PC-9 (cell line): ENCODE measurements at regions of chrX and their contacts with region 1.

Region 1: DNA sequence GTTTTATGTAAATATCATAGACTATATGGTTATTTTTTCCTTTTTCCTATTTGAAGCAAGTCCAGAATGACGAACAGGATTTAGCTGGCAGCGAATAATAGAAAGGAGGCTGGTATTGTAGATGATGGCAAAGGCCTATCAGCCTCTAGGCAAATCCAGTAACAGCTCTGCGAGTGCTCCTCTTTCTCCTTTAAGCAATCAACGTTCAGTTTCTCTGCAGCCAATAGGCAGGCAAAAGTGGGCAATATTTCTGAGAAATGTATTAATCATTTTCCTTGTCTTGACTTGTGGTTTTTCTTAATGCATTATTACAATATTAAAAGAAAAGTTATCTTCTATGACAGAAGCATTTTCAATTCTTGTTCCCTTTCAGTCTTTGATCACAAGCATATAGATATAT is 183.3 kb downstream of the SH3KBP1 start:
- DNase-seq: no peak
- H3K4me3 ChIP-seq: no peak overlapping the region
- H3K27ac ChIP-seq: no peak overlapping the region
- H3K4me1 ChIP-seq: peaks cover 4% of the 10 kb centered on the region
- H3K27me3 ChIP-seq: no peaks in the 10 kb centered on the region
- CTCF ChIP-seq: no peak

Region 2: DNA sequence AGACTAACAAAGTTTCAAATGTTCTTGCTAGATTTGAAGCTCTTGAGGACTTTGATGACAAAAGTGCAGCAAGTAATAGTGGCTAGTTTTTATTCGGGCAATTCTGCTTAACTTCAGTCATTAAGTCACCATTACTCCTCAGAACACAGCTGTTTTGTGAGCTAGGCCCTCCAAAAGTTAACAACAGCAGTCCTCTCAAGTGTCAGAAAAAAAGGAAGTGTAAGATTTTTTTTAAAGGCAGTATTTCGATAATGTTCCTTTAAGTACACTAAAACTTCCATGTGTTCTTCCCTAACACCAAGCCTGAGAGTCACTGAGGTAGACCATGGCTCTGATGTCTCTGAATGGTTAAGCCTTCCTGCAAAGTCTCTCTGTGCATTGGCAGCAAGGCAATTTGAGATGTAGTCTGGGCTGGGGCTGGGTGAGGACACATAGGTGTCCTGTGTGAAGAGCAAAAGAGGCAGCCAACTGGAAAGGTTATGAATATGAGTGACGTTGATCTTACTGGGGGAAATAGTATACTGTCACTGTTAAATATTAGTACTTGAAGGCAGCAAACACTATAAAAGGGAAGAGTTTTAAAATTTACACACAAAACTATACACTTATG is 14.9 kb before region 1 on chrX:
- CTCF ChIA-PET with region 1: no interaction called
- POLR2A ChIA-PET with region 1: no interaction called
- intact Hi-C with region 1: loop called (anchors 1 kb)
- DNase-seq: no peak
- H3K4me3 ChIP-seq: no peak overlapping the region
- H3K27ac ChIP-seq: no peak overlapping the region
- H3K4me1 ChIP-seq: no peaks in the 10 kb centered on the region
- H3K27me3 ChIP-seq: no peaks in the 10 kb centered on the region
- CTCF ChIP-seq: no peak